ENCODE measurements at regions of chr3 and their contacts with region 1.

Region 1: DNA sequence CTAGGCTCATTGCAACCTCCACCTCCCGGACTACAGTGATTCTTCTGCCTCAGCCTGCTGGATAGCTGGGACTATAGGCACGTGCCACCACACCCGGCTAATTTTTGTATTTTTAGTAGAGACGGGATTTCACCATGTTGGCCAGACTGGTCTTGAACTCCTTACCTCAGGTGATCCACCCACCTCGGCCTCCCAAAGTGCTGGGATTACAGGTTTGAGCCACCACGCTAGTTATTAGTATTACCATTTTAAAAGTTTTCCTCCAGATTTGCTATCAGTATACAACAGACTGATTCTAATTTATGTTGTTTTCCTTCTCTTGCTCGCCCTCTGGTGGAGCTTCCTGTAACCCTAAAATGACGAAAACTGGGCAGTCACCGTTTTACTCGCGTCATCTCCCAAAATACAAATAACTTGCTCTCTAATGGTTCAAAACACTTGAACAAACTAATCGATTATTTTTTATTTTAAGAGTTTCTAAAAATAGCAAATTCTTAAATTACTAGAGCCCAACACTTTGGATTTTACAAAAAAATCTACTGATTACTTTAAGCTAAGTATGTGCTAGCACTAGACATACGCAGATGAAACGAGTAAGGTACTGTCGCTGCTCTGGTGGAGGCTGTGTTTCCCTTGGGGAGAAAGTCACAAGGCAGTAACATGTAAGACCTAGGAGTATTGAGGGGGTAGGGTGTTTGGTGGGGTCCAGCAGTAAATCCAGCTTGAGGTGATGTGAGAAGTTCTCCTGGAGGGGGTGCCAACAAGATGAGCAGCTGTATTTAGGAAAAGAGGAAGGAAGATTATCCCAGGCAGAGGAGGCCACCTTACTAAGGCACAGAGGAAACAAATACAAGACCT is 203.3 kb downstream of the MBNL1 start:
- DNase-seq: peak in 1 of 2 donors; percentile 88
- H3K4me3 ChIP-seq: peak overlapping the region; percentile 2 to 32
- H3K27ac ChIP-seq: peak overlapping the region; percentile 49 to 52
- H3K4me1 ChIP-seq: peaks cover 0 to 2% of the 10 kb centered on the region in 2 donors
- H3K27me3 ChIP-seq: no peaks in the 10 kb centered on the region
- CTCF ChIP-seq: peak; percentile 47 to 72 (median 69)

Region 2: GRCh38 chr3:151925876-151926275 is 546.2 kb before region 1 on chr3:
- intact Hi-C with region 1: loop called (anchors 5 kb)
- DNase-seq: no peak
- H3K4me3 ChIP-seq: no peak overlapping the region
- H3K27ac ChIP-seq: peak overlapping the region in 1 of 2 donors; percentile 43
- H3K4me1 ChIP-seq: peaks cover 0 to 10% of the 10 kb centered on the region in 2 donors
- H3K27me3 ChIP-seq: no peaks in the 10 kb centered on the region
- CTCF ChIP-seq: no peak

Region 3: GRCh38 chr3:152524198-152525140 is 52.4 kb after region 1 on chr3:
- intact Hi-C with region 1: loop called (anchors 5 kb)
- DNase-seq: no peak
- H3K4me3 ChIP-seq: no peak overlapping the region
- H3K27ac ChIP-seq: no peak overlapping the region
- H3K4me1 ChIP-seq: no peaks in the 10 kb centered on the region
- H3K27me3 ChIP-seq: no peaks in the 10 kb centered on the region
- CTCF ChIP-seq: peak; percentile 46 to 86 (median 79)

Region 4: DNA sequence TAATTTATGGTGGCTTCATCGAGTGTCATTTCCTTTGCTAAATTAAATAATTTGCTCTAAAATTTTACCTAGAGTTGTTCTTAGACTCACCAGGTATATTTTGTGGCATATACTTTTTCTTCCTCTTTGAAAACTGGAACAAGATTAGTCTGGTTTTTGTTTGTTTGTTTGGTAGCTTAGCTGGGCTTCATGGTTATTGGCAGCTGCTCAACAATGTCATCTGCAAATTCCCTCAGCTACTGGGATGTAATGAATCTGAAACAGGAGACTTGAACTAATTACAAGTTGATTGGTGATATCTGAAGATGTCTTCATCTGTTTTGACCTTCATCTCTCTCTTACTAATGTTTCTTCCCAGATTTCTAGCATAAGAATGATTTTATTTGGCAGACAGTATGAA is 92.4 kb after region 1 on chr3:
- intact Hi-C with region 1: no loop called
- DNase-seq: no peak
- H3K4me3 ChIP-seq: no peak overlapping the region
- H3K27ac ChIP-seq: no peak overlapping the region
- H3K4me1 ChIP-seq: no peaks in the 10 kb centered on the region
- H3K27me3 ChIP-seq: no peaks in the 10 kb centered on the region
- CTCF ChIP-seq: no peak

Region 5: DNA sequence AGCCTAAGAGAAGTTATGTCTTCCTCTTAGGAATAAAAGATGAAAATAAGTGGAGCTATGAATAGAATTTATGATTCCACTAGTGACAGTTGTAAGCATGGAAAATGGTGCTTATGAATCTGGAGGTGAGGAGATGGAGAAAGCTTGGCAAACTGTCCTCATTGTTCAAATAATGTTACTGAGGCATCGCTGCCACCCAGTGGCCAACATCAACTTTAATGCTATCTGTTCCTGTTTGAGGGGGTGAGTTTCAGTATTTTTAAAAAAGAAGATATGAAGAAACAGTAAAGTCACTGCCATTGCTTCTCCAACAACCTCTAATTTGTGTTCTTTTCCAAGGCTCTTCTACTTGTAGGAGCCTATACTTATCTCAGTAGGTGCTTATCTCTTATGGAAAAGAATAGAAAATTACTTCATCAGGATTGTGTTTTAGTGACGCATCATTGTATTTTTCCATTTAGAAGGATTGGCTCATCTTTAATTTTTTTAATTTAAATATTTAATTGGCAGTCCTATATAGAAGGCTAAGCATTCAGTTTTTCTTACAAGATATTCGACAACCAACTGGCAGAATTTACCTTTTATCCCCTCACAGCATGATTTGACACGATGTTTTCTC is 102.5 kb after region 1 on chr3:
- intact Hi-C with region 1: loop called (anchors 2 kb)
- DNase-seq: peak in 1 of 2 donors; percentile 72
- H3K4me3 ChIP-seq: no peak overlapping the region
- H3K27ac ChIP-seq: no peak overlapping the region
- H3K4me1 ChIP-seq: no peaks in the 10 kb centered on the region
- H3K27me3 ChIP-seq: no peaks in the 10 kb centered on the region
- CTCF ChIP-seq: peak; percentile 10 to 54 (median 34)

Region 6: DNA sequence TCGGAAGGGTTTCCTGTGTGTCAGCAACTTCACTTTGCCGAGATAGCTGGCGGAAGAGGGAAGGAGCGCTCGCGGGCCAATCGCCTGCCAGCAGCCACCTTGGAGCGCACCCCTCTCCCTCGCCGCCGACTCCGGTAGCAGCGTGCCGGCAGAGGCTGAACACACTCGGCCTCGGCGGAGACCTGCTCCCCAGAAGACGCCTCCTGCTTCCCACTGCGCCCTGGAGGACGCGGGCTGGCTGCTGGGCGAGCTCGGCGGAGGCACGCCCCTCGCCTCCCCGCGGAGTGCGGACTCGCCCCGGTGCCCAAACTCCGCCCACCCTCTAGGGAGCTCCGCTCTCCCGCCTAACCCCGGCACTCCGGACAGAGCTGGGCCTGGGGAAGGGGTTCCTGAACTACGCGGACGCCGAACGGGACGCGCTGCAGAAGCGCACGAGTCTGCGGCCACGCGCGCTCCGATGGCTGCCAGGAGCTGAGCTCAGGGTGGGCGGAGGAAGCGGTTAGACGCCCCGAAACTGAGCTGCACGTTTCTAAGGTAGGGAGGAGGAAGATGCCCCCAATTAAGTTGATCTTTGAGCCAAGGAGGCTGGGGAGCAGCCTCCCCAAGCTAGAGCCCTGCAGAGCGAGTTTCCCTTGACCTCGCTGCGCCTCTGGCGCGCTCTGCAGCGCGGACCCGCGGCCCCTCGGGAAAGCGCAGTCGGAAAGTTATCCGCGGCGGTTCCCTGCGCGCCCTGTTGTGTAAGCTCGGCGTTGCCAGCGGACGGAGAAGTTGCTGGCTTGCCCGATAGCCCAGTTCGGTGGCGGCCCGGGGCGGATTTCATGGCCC is 362.9 kb after region 1 on chr3 and contains the start of gene P2RY1:
- intact Hi-C with region 1: loop called (anchors 10 kb)
- DNase-seq: peak in 1 of 2 donors; percentile 75
- H3K4me3 ChIP-seq: peak within 1 kb of the TSS; percentile 81 to 83
- H3K27ac ChIP-seq: peak within 1 kb of the TSS; percentile 46 to 54
- H3K4me1 ChIP-seq: no peaks in the 10 kb centered on the region
- H3K27me3 ChIP-seq: no peaks in the 10 kb centered on the region
- CTCF ChIP-seq: peak in 2 of 3 experiments; percentile 34 to 45
- total RNA-seq, gene P2RY1: 8.8 TPM